GM10248 (cell line): ENCODE measurements at regions of chr2 and their contacts with region 1.

Region 1: DNA sequence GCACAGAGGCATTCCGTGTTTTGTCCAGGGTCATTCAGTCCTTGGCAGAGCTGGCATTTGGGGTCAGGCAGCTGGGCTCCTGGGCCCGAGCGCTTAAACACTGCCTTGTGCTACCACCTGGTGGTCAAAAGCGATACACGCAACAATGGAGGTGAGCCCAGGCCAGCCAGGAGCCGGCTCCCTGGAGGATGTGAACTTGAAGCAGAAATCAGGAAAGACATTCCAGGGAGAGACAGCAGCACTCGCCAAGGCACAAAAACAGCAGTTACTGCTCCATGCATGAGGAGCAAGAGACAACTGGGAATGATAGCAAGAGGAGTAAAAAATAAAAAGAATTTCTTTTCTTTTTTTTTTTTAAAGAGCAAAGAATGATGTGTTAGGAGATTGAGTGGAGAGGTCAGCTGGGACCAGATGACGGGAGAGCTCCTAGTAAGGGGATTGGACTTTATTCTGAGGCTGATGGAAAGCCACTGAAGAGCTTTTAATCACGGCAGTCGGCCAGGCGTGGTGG is 20.7 kb downstream of the SCYGR8 start:
- DNase-seq: peak; percentile 79
- CTCF ChIP-seq: peak; percentile 89

Region 2: DNA sequence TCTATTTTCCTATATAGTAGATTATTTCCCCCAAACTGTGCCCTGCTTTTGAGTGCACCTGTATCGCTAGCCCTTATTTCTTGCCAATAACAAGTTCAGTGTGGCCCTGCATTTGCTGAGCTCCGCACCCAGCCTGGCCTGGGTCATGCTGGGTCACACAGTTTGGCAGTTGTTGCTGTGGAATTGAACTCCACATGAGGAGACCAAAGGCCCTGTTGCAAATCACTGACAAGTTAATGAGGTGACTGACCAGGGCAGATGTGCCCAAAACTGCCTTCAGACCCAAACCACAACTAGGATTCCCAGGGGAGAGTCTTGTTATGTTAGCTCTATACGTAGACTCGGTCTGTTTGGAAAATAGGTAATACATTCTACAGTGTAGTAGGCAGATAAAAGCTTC is 633.4 kb before region 1 on chr2:
- CTCF ChIA-PET with region 1: interaction called, 27 read pairs
- POLR2A ChIA-PET with region 1: no interaction called
- DNase-seq: no peak
- CTCF ChIP-seq: no peak

Region 3: GRCh38 chr2:227783404-227784138 is 17.1 kb after region 1 on chr2:
- CTCF ChIA-PET with region 1: interaction called, 24 read pairs
- POLR2A ChIA-PET with region 1: no interaction called
- DNase-seq: peak; percentile 79
- CTCF ChIP-seq: no peak

Region 4: DNA sequence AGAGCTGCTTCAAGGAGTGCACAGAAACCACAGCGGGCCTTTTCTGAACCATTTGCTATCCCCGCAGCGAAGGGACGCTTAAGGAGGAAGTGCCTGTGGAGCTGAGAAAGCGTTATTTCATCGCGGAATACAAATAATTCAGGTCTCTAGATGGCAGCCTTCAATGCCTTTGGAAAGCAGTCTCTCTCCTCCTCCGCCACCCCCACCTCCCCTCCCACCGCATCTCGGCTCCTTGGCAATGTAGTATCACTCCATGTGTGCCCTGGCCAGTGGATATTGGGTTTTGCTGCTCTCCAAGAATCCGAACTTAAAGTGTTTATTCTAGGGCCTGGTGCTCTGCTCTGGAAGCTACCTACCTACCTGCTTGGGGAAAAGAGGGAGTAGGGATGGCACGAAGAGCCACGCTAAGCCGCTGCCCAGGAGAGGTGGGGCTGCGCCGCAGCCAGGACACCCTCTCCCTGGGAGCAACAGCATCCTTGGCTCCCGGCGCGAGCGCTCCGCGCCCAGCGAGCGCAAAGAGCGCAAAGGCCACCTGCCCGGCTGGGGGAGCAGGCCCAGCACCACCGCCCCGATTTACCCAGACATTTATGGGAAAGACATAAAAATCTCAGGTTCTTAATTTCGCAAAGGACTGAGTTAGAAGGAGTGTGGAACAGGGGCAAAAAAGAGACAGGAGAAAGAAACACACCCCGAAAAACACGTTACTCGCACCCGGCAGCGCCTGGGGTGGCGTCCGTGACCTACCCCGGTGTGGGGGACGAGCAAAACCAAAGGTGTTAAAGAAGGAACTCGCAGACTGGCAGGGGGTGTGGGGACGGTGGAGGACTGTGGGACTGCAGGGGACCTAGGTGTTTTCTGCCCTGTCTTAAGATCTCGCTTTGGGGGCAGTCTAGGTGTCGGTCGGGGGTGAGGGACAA is 414.0 kb after region 1 on chr2:
- CTCF ChIA-PET with region 1: no interaction called
- POLR2A ChIA-PET with region 1: no interaction called
- DNase-seq: no peak
- CTCF ChIP-seq: no peak